A549 (cell line): ENCODE measurements at regions of chr1 and their contacts with region 1.

Region 1: GRCh38 chr1:203871107-203871875 is 9.9 kb downstream of the SNRPE start:
- DNase-seq: peak; percentile 76 to 94
- ATAC-seq: peak; percentile 94 to 96
- H3K4me3 ChIP-seq: no peak overlapping the region
- H3K27ac ChIP-seq: peak overlapping the region in 1 of 2 experiments; percentile 23; a peak in 1 of 6 replicates
- H3K4me1 ChIP-seq: peaks cover 6% of the 10 kb centered on the region; the same call in 2 of the 3 replicates
- CTCF ChIP-seq: peak; percentile 96
- EP300 ChIP-seq: no peak
- POLR2A ChIP-seq: no peak
- RAD21 ChIP-seq: peak; percentile 96 to 98

Region 2: GRCh38 chr1:203828002-203828401 is 43.3 kb before region 1 on chr1:
- CTCF ChIA-PET with region 1: no interaction called
- POLR2A ChIA-PET with region 1: no interaction called
- DNase-seq: no peak
- ATAC-seq: no peak
- H3K4me3 ChIP-seq: no peak overlapping the region
- H3K27ac ChIP-seq: no peak overlapping the region
- H3K4me1 ChIP-seq: no peaks in the 10 kb centered on the region
- CTCF ChIP-seq: no peak
- EP300 ChIP-seq: no peak
- POLR2A ChIP-seq: no peak
- RAD21 ChIP-seq: no peak

Region 3: GRCh38 chr1:203888807-203889251 is 17.5 kb after region 1 on chr1:
- CTCF ChIA-PET with region 1: interaction called, 42 read pairs
- POLR2A ChIA-PET with region 1: no interaction called
- DNase-seq: peak; percentile 32 to 61
- ATAC-seq: peak; percentile 59 to 89; a peak in 4 of 6 replicates
- H3K4me3 ChIP-seq: no peak overlapping the region
- H3K27ac ChIP-seq: peak overlapping the region; percentile 27 to 85
- H3K4me1 ChIP-seq: peaks cover 17% of the 10 kb centered on the region; the same call in 2 of the 3 replicates
- CTCF ChIP-seq: no peak
- EP300 ChIP-seq: no peak
- POLR2A ChIP-seq: no peak
- RAD21 ChIP-seq: no peak; a peak in 1 of 5 replicates

Region 4: GRCh38 chr1:203926025-203926540 is 54.8 kb after region 1 on chr1:
- CTCF ChIA-PET with region 1: interaction called, 24 read pairs
- POLR2A ChIA-PET with region 1: no interaction called
- DNase-seq: peak in 1 of 2 experiments; percentile 27
- ATAC-seq: peak; percentile 72 to 88
- H3K4me3 ChIP-seq: no peak overlapping the region
- H3K27ac ChIP-seq: peak overlapping the region; percentile 44 to 75; a peak in 5 of 6 replicates
- H3K4me1 ChIP-seq: peaks cover 12% of the 10 kb centered on the region; the same call in 2 of the 3 replicates
- CTCF ChIP-seq: no peak
- EP300 ChIP-seq: no peak
- POLR2A ChIP-seq: no peak
- RAD21 ChIP-seq: no peak

Region 5: DNA sequence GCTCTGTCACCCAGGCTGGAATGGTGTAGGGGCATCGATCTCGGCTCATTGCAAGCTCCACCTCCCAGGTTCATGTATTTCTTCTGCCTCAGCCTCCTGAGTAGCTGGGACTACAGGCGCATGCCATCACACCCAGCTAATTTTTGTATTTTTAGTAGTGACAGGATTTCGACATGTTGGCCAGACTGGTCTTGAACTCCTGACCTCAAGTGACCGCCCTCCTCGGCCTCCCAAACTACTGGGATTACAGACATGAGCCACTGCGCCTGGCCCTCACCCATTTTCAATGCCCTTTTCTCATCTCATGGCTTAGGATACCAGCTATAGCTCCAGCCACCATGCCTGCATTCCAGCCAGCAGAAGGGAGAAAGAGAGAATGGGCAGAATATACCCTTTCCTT is 188.7 kb after region 1 on chr1:
- CTCF ChIA-PET with region 1: interaction called, 35 read pairs
- POLR2A ChIA-PET with region 1: interaction called, 3 read pairs
- DNase-seq: no peak
- ATAC-seq: no peak
- H3K4me3 ChIP-seq: no peak overlapping the region
- H3K27ac ChIP-seq: no peak overlapping the region
- H3K4me1 ChIP-seq: peaks cover 19% of the 10 kb centered on the region
- CTCF ChIP-seq: no peak
- EP300 ChIP-seq: no peak
- POLR2A ChIP-seq: no peak
- RAD21 ChIP-seq: no peak

Region 6: DNA sequence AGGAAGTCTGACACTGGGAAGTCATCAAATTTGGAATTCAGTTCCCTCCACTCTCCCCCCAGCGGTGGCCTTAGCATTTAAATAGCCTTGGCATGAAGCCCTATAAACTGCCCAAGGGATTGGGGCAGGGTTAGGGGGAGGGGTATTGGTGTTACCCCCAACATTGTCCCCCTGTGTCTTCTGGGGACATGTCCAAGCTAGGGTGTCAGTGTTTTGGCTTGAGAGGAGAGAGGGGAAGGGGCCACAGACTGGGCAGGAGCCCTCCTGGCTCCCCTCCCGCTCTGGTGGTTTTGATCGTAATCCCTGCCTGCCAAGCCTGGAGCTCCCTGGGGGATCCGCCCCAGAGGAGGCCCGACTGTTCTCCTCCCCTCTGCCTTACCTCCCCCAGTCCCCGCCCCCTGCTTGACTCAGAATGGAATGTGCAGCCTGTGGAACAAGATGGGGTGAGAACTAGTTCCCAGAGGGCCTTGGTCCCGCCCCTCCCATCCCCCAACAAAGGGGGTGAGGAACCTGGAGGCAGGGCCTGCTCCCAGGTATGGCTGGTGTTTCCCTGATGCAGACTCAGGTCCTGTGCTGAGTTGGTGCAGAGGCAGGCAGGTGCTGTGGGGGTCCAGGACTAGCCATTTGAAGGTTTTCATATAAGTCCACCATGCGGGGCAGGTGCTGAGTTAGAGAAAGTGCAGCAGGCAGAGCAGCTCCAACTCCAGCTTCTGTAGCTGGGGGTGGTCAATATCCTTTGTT is 209.0 kb after region 1 on chr1:
- CTCF ChIA-PET with region 1: interaction called, 53 read pairs
- POLR2A ChIA-PET with region 1: interaction called, 4 read pairs
- DNase-seq: peak; percentile 85 to 95
- ATAC-seq: peak; percentile 90 to 91
- H3K4me3 ChIP-seq: no peak overlapping the region
- H3K27ac ChIP-seq: peak overlapping the region; percentile 71 to 86
- H3K4me1 ChIP-seq: peaks cover 55% of the 10 kb centered on the region
- CTCF ChIP-seq: no peak
- EP300 ChIP-seq: no peak
- POLR2A ChIP-seq: no peak
- RAD21 ChIP-seq: no peak

Region 7: DNA sequence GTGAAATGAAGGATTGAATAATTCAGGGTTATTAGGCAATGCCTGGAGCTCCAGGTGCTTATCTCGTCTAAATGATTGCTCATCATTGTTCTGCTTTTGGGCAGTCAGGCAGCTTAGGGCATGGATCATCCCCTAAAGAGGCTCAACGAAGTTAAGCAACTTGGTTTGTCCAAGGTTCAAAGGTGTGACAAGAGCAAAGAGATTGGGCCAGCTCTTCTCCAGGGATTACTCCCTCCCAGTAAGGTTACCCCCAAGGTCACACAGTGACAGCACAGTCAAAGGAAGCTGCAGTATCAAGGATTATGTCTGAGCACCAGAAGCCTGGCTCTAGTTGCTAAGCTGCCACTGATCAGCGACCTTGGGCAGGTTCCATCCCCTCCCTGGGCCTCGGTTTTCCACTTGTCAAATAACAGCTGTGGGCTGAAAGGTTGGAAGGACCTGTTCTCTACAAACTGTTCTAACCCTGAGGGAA is 273.8 kb after region 1 on chr1:
- CTCF ChIA-PET with region 1: interaction called, 757 read pairs
- POLR2A ChIA-PET with region 1: no interaction called
- DNase-seq: no peak
- ATAC-seq: no peak
- H3K4me3 ChIP-seq: no peak overlapping the region
- H3K27ac ChIP-seq: no peak overlapping the region
- H3K4me1 ChIP-seq: no peaks in the 10 kb centered on the region
- CTCF ChIP-seq: no peak
- EP300 ChIP-seq: no peak
- POLR2A ChIP-seq: no peak
- RAD21 ChIP-seq: no peak